Heart right ventricle (tissue), 16 donors: ENCODE measurements at regions of chr19 and their contacts with region 1.

Region 1: DNA sequence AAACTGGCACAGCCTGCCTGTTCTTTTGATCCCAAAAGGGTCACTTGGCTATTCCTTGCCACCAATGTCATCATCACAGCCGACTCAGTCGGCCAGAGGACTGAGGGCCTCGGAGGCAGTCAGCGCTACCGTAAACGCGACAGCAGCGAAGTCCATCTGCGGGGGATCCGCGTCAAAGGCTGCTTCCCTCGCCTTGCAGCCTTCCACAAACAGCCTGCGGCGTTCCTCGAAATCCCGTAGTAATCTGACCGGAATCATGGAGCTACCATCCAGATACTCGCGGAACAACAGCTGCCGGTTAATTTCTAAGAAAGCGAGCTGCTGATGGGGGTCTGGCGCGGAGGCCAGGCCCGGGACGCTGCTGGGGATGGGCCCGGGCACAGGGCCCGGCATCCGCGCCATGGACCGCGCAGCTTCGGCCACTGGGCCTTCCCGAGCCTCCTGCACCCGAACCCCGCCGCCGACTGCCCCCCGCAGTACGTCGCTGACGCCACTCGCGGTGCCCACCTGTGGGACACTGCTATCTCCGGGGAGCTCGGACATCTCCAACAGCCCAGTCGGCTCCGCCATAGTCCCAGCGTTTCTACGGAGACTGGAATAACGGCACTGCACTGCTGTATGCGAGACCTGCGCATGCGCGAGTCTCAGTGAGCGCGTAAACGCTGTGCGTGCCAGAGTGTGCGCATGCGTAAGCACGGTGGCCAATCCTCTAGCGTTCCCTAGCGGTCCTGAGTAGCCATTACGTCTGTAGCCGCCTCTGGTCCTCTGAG is at the start of gene EID2B:
- DNase-seq: peak; percentile 94 to 97
- ATAC-seq: peak; percentile 97 to 99 (median 99)
- H3K4me3 ChIP-seq: peak within 1 kb of the TSS; percentile 73 to 96 (median 88)
- H3K27ac ChIP-seq: peak within 1 kb of the TSS; percentile 42 to 93 (median 86)
- H3K4me1 ChIP-seq: peaks cover 2 to 27% (median 20%) of the 10 kb centered on the region in 9 donors
- H3K27me3 ChIP-seq: no peaks in the 10 kb centered on the region
- CTCF ChIP-seq: peak; percentile 96 to 99 (median 98)
- total RNA-seq, gene EID2B: 2.2 to 4.7 (median 3.5) TPM

Region 2: GRCh38 chr19:39397360-39398296 is 134.8 kb before region 1 on chr19:
- intact Hi-C with region 1: loop called in 4 of 10 experiments (anchors 5 kb)
- DNase-seq: peak; percentile 88 to 93
- ATAC-seq: peak; percentile 77 to 87 (median 84)
- H3K4me3 ChIP-seq: peak overlapping the region in 3 of 10 donors; percentile 3 to 28 (median 21)
- H3K27ac ChIP-seq: peak overlapping the region; percentile 32 to 97 (median 78)
- H3K4me1 ChIP-seq: peaks cover 12 to 59% (median 31%) of the 10 kb centered on the region in 9 donors
- H3K27me3 ChIP-seq: no peaks in the 10 kb centered on the region
- CTCF ChIP-seq: peak; percentile 95 to 99 (median 98)

Region 3: GRCh38 chr19:39445265-39446111 is 86.9 kb before region 1 on chr19 and contains the start of gene SUPT5H:
- intact Hi-C with region 1: loop called in 4 of 10 experiments (anchors 1 to 10 kb)
- DNase-seq: peak; percentile 96 to 98
- ATAC-seq: peak; percentile 98 to 99 (median 99)
- H3K4me3 ChIP-seq: peak within 1 kb of the TSS; percentile 72 to 97 (median 84)
- H3K27ac ChIP-seq: peak within 1 kb of the TSS; percentile 70 to 97 (median 93)
- H3K4me1 ChIP-seq: peaks cover 6 to 49% (median 35%) of the 10 kb centered on the region in 9 donors
- H3K27me3 ChIP-seq: no peaks in the 10 kb centered on the region
- CTCF ChIP-seq: no peak
- total RNA-seq, gene SUPT5H: 65.0 to 96.6 (median 84.3) TPM

Region 4: DNA sequence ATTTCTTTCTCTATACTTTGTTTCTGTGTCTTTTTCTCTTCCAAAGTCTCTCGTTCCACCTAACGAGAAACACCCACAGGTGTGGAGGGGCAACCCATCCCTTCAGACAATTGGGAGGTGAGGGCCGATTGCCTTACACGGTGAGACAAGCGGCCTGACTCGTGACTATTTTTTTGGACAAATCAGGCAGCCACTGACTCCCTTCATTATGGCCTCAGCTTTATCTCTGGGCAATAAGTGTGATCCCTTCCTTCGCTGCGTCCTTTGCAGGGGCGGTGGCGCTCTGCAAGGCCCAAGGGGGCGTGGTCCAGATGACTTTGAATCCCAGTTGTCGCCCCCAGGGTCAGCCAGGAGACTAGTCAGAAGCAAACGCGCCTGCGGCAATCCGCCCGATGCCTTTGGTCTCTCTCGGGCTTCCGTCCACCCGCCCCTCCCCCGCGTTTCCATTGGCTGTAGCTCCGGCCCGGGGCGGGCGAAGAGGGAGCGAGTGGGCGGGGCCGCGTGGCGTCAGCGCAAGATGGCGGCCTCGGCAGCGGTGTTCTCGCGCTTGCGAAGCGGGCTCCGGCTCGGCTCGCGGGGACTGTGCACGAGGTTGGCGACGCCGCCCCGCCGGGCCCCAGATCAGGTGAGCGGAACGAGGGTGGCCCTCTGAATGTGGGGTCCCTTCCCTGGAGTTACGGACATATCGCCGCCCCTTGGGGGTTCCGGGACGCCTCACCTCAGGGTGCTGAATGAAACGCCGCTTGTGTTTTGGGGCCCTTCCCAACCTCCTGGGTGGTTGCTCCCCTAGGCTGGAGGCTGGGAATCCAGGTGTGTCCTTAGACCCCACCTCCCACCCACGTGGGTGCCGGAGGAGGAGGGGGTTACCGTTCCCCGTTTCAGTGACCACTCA is 51.8 kb before region 1 on chr19 and contains the start of gene TIMM50:
- intact Hi-C with region 1: loop called in 6 of 10 experiments (anchors 2 to 10 kb)
- DNase-seq: peak; percentile 97 to 98
- ATAC-seq: peak; percentile 97 to 99 (median 98)
- H3K4me3 ChIP-seq: peak within 1 kb of the TSS; percentile 71 to 100 (median 94)
- H3K27ac ChIP-seq: peak within 1 kb of the TSS; percentile 66 to 89 (median 82)
- H3K4me1 ChIP-seq: peaks cover 3 to 23% (median 19%) of the 10 kb centered on the region in 9 donors
- H3K27me3 ChIP-seq: no peaks in the 10 kb centered on the region
- CTCF ChIP-seq: no peak
- total RNA-seq, gene TIMM50: 67.3 to 111 (median 78.9) TPM